Activated CD8-positive, alpha-beta memory T cell treated with anti-CD3 and anti-CD28 coated beads, Interleukin-2, amount 10 ng/mL, durations not matched to agents 7 days and 5 days (primary cell): ENCODE measurements at regions of chr6 and their contacts with region 1.

Region 1: DNA sequence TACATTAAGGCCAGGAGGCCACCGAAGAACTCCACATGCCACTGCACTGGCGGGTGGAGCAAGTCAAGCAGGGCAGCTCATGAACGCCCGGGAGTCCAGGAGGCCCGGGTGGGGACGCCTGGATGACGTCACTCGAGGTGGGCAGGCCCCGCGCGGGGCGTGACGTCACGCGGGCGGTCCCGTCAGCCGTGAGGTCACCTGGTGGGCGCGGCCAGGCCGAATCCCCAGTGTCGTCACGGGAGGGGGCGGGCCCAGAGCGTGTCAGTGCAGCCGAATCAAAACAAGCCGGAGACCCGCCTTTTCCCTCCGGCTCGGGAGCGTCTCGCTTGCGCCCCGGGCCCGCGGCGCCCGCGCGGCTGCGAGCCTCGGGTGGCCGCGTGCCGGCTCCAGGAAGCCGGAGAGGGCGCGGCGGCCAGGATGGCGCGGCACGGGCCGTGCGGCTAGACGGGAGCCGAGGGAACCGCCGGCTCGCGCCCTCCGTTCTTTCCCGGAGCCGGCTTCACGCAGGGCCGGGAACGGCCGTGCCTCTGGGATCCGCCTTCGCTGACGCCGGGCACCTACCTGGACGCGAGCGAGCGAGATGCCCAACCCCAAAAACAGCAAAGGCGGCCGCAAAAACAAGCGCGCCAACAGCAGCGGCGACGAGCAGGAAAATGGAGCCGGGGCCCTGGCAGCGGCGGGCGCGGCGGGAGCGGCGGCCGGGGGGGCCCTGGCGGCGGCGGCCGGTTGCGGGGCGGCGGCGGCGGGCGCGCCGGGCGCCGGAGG is at the start of gene HECA:
- DNase-seq: peak; percentile 98
- ATAC-seq: peak; percentile 77
- H3K4me3 Mint-ChIP-seq: peak within 1 kb of the TSS; percentile 91
- H3K27ac Mint-ChIP-seq: peak within 1 kb of the TSS; percentile 95
- H3K4me1 Mint-ChIP-seq: peaks cover 61% of the 10 kb centered on the region
- H3K27me3 Mint-ChIP-seq: no peaks in the 10 kb centered on the region
- total RNA-seq, gene HECA: 47.3 to 49.5 TPM

Region 2: DNA sequence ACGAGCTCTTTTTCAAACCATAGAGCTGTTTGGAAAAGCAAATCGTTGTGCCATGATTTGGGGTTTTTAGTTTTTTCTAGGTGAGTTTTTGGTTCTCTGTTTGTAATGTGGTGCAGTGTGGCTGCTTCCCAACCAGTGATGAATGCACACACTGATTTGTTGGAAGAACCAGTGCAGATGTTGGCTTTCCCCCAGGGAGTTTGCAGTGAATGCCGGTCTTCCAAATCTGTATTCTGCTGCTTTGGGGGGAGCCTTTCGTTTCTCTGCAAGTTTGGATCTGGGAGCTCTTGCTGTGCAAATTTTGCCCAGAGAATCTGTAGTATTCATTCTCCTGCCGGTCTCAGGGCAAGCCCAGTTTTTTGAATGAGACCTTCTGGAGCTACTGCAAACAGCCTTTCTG is 14.4 kb after region 1 on chr6:
- CTCF ChIA-PET with region 1: interaction called, 25 read pairs
- DNase-seq: no peak
- ATAC-seq: no peak
- H3K4me3 Mint-ChIP-seq: peak overlapping the region; percentile 29
- H3K27ac Mint-ChIP-seq: peak overlapping the region; percentile 81
- H3K4me1 Mint-ChIP-seq: peaks cover 89% of the 10 kb centered on the region
- H3K27me3 Mint-ChIP-seq: no peaks in the 10 kb centered on the region